ENCODE measurements at regions of chr20 and their contacts with region 1.

Region 1: GRCh38 chr20:50415516-50416113 is 94.6 kb upstream of the PTPN1 start:
- DNase-seq: peak; percentile 99
- H3K4me3 Mint-ChIP-seq: peak overlapping the region; percentile 59
- H3K27ac Mint-ChIP-seq: peak overlapping the region; percentile 96
- H3K4me1 Mint-ChIP-seq: peaks cover 43% of the 10 kb centered on the region
- H3K27me3 Mint-ChIP-seq: no peaks in the 10 kb centered on the region
- CTCF ChIP-seq: no peak

Region 2: DNA sequence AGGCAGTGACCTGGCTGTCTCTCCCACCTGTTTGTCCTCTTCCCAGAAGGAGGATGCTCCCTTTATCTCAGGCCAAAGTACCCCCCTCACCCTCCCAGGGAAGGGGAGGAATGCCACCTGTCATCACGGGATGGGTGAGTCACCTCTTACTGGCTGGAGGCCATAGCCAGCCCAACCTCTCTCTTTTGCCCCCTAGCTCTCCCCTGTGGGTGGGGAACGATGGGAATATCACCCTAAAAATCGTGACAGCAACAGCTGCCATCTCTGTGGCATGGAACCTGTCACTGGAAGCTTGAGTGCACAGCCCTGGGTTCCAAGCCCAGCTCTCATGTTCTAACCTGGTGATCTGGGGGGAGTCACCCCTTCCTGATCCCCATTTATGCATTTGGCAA is 42.8 kb before region 1 on chr20:
- CTCF ChIA-PET with region 1: interaction called, 3 read pairs
- POLR2A ChIA-PET with region 1: interaction called, 15 read pairs
- intact Hi-C with region 1: no loop called
- DNase-seq: peak; percentile 68
- H3K4me3 Mint-ChIP-seq: peak overlapping the region; percentile 40
- H3K27ac Mint-ChIP-seq: peak overlapping the region; percentile 90
- H3K4me1 Mint-ChIP-seq: peaks cover 70% of the 10 kb centered on the region
- H3K27me3 Mint-ChIP-seq: no peaks in the 10 kb centered on the region
- CTCF ChIP-seq: no peak

Region 3: DNA sequence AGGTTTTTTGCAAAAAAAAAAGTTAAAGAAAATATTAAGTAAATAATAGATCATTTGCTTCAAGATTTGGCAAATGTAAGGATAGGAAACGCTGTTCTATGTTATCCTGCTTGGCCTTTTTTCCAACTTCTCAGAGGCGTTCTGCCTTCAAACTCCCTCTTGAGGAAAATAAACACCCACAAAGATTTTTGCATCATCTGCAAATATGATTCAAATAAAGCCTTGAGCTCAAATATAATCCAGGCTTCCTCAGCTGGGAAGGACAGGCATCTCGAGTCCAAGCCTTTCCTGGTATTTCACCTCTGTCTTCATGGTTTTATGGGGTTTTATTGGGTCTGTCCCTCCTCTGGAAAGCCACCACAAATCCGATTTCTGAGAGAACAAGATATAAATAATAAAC is 26.9 kb after region 1 on chr20:
- CTCF ChIA-PET with region 1: interaction called, 12 read pairs
- POLR2A ChIA-PET with region 1: no interaction called
- intact Hi-C with region 1: no loop called
- DNase-seq: no peak
- H3K4me3 Mint-ChIP-seq: no peak overlapping the region
- H3K27ac Mint-ChIP-seq: no peak overlapping the region
- H3K4me1 Mint-ChIP-seq: peaks cover 25% of the 10 kb centered on the region
- H3K27me3 Mint-ChIP-seq: no peaks in the 10 kb centered on the region
- CTCF ChIP-seq: no peak

Region 4: DNA sequence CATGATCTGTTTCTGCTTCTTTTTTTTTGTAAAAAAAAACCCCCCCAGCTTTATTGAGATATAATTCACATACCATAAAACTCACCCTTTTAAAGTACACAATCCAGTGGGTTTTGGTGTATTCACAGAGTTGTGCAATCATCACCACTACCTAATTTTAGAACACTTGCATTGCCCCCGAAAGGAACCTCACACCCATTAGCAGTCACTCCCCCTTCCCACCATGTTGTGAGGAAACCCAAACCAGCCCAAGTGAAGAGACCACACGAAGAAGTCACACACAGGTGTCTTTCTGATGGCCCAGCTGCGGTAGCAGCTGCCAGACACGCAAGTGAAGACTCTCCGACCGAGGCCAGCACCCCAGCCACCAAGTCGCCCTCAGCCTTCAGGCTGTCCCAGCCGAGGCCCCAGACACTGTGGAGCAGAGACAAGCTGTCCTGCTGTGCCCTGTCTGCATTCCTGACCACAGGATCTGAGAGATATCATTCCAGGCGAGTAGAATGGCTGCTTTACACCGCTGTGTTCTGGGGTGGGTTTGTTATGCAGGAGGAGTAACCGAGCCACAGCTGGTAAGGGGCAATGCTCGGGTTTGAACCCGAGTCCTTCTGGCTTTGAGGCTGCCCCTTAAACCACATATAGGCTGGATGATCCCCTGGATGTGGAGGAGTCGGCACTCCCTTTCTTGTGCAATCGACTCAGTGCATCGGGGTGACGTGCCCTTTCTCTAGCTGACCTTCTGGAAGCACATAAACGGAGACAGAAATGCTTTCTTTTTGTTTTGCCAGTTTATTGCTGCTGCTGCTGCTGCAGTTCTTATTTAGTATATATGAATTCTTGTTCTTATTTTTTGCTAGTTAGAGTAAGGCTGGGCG is 35.5 kb after region 1 on chr20:
- CTCF ChIA-PET with region 1: interaction called, 4 read pairs
- POLR2A ChIA-PET with region 1: interaction called, 35 read pairs
- intact Hi-C with region 1: loop called (anchors 5 kb)
- DNase-seq: peak; percentile 82
- H3K4me3 Mint-ChIP-seq: peak overlapping the region; percentile 53
- H3K27ac Mint-ChIP-seq: peak overlapping the region; percentile 66
- H3K4me1 Mint-ChIP-seq: peaks cover 28% of the 10 kb centered on the region
- H3K27me3 Mint-ChIP-seq: no peaks in the 10 kb centered on the region
- CTCF ChIP-seq: no peak

Region 5: DNA sequence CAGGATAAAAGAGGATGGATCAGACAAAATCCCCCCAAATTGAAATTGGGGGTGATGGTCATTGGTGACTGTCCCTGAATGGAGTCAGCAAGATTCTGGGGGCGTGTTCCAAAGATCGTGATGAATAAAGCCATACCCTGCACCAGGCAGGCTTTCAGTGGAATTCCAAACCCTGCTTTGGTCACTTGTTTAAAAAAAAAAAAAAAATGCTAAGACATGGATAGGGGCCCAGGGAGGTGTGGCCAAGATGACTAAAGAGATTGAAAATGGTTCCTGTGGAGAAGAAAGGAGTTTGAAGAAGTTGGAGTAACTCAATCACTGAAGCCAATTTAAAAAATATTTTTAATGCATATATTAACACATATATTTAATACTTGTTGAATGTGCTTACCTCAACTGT is 768.7 kb after region 1 on chr20:
- CTCF ChIA-PET with region 1: no interaction called
- POLR2A ChIA-PET with region 1: no interaction called
- intact Hi-C with region 1: no loop called
- DNase-seq: no peak
- H3K4me3 Mint-ChIP-seq: no peak overlapping the region
- H3K27ac Mint-ChIP-seq: no peak overlapping the region
- H3K4me1 Mint-ChIP-seq: no peaks in the 10 kb centered on the region
- H3K27me3 Mint-ChIP-seq: peaks cover 39% of the 10 kb centered on the region
- CTCF ChIP-seq: no peak

Measured in MCF 10A (cell line).